Esophagus muscularis mucosa (tissue), 4 donors: ENCODE measurements at regions of chr9 and their contacts with region 1.

Region 1: GRCh38 chr9:122099271-122099869 is 6.3 kb upstream of the TTLL11 start:
- DNase-seq: peak; percentile 96
- H3K4me3 ChIP-seq: no peak overlapping the region
- H3K27ac ChIP-seq: no peak overlapping the region
- H3K4me1 ChIP-seq: peaks cover 0 to 25% (median 12%) of the 10 kb centered on the region in 4 donors
- H3K27me3 ChIP-seq: no peaks in the 10 kb centered on the region
- CTCF ChIP-seq: peak; percentile 83 to 91 (median 89)
- EP300 ChIP-seq: no peak
- POLR2A ChIP-seq: no peak

Region 2: DNA sequence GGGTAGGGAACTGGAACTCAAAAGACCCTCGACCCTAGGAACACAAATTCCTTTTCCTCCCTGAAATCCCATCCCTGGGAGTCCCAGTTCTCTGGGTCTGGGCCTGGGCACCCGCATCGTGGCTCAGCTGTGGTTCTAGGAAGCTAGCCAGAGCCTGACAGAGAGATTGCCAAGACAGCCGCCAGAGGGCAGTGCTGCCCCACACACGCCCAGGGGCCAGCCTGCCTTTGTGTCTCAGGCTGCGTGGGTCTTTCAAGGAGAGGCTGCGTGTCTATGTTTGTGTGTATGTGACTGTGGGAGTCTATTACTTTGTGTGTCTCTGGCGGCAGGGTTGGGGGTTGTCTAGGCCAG is 25.8 kb after region 1 on chr9:
- intact Hi-C with region 1: loop called (anchors 1 kb)
- DNase-seq: no peak
- H3K4me3 ChIP-seq: no peak overlapping the region
- H3K27ac ChIP-seq: no peak overlapping the region
- H3K4me1 ChIP-seq: peaks cover 32 to 36% (median 33%) of the 10 kb centered on the region in 4 donors
- H3K27me3 ChIP-seq: peaks cover 0 to 23% (median 2%) of the 10 kb centered on the region in 4 donors
- CTCF ChIP-seq: peak; percentile 95 to 98 (median 96)
- EP300 ChIP-seq: no peak
- POLR2A ChIP-seq: no peak

Region 3: DNA sequence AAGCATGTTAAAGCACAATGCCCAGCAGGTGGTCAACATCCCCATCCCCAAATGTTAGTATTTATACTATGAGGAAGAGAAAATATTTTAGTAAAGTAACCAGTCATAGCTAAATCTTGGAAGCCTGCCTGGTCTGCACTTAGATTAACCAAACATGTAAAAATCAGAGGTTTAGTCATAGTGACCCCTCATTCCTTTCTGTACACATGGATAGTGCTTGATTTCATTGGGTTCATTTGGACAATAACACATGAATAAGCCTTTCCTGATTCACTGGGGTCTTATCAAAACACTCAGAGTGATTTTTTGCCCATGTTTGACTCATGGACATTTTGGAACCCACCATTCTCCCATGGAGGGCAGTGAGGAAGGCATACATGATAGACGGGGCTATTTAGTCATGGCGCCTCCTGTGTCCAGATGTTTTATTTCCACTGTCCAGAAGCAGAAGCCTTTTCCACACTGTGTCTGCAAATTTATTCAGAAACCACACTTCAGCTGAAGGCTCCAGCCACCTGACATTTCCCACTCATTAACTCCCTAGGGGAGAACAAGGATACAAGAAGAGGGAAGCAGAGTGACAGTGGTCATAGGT is 345.9 kb after region 1 on chr9:
- intact Hi-C with region 1: loop called (anchors 5 kb)
- DNase-seq: no peak
- H3K4me3 ChIP-seq: no peak overlapping the region
- H3K27ac ChIP-seq: no peak overlapping the region
- H3K4me1 ChIP-seq: no peaks in the 10 kb centered on the region
- H3K27me3 ChIP-seq: no peaks in the 10 kb centered on the region
- CTCF ChIP-seq: no peak
- EP300 ChIP-seq: no peak
- POLR2A ChIP-seq: no peak